Activated CD4-positive, alpha-beta memory T cell treated with anti-CD3 and anti-CD28 coated beads, Interleukin-2, amount 10 ng/mL, durations not matched to agents 7 days and 5 days (primary cell): ENCODE measurements at regions of chr6 and their contacts with region 1.

Region 1: DNA sequence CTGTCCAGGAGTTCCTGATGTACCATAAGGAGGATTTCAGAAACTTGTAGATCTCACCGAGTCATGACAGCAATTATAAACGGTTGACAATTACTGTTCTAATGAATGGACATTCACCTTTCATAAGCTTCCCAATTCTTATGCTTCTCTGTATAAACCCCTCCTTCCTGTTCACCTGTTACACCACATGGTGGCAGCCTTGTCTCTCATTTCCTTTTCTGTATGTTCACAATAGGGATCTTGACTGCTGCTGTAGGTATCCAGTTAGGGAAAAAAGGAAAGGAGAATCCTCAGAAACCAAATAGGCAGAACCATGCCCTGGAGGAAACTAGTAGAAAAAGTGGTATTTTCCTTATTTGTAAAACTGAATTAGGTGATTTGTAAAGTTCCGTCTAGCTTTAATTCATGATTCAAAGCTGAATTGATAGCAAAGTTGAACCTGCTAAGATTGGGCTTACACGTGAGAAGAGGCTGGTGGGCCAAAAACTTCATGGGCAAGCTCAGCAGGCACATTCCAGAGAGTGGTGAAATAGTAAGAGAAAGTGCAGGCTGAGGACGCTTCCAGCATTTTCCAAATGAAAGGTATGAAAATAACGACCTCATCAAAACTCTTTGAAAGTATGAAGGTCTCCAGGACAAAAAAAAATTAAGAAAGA is 29.0 kb upstream of the TBPL1 start:
- DNase-seq: peak; percentile 56
- H3K4me3 Mint-ChIP-seq: no peak overlapping the region
- H3K27ac Mint-ChIP-seq: no peak overlapping the region
- H3K4me1 Mint-ChIP-seq: no peaks in the 10 kb centered on the region
- H3K27me3 Mint-ChIP-seq: peaks cover 34% of the 10 kb centered on the region

Region 2: DNA sequence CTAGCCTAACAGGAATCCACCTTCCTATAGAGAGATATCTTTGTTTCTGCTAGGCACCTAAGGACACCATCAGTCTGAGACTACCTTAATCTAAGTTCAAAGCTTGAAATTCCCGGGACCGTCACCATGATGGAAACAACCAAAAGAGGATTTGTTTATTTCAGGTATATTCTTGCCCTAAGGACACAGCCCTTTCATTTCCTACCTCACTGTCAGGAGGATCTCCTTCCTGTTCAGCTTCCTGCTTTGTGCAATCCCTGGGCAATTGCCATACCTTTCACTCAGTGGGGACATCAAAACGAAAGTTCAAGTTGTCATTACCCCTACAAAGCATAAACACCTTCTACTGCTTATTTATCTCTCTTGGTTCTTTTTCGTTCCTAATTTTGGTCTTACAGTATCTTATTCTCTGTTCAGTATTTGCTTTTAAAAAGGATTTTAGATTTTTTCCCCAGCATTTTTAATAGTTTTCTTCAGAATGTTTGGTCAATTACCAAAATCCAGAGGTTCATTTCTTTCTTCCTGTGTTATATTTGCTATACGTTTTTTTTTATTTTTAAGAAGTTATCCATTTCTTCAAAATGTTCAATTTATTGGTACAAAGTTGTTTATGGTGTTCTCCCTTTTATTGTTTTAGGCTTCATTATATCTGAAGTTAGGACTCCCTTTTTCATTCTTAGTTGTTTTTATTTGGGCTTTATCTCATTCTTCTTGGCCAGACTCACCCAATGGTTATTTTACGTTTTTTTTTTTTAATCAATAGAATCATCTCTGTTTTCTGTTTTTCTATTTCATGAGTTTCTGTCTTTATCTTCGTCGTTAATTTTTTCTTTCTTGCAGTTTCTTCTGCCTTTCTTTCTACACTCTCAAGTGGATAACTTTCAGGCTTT is 16.0 kb after region 1 on chr6:
- CTCF ChIA-PET with region 1: interaction called, 12 read pairs
- POLR2A ChIA-PET with region 1: no interaction called
- DNase-seq: no peak
- H3K4me3 Mint-ChIP-seq: no peak overlapping the region
- H3K27ac Mint-ChIP-seq: no peak overlapping the region
- H3K4me1 Mint-ChIP-seq: peaks cover 2% of the 10 kb centered on the region
- H3K27me3 Mint-ChIP-seq: peaks cover 18% of the 10 kb centered on the region

Region 3: GRCh38 chr6:133945158-133945557 is 21.1 kb after region 1 on chr6:
- CTCF ChIA-PET with region 1: interaction called, 12 read pairs
- POLR2A ChIA-PET with region 1: no interaction called
- DNase-seq: no peak
- H3K4me3 Mint-ChIP-seq: no peak overlapping the region
- H3K27ac Mint-ChIP-seq: no peak overlapping the region
- H3K4me1 Mint-ChIP-seq: peaks cover 2% of the 10 kb centered on the region
- H3K27me3 Mint-ChIP-seq: peaks cover 12% of the 10 kb centered on the region

Region 4: DNA sequence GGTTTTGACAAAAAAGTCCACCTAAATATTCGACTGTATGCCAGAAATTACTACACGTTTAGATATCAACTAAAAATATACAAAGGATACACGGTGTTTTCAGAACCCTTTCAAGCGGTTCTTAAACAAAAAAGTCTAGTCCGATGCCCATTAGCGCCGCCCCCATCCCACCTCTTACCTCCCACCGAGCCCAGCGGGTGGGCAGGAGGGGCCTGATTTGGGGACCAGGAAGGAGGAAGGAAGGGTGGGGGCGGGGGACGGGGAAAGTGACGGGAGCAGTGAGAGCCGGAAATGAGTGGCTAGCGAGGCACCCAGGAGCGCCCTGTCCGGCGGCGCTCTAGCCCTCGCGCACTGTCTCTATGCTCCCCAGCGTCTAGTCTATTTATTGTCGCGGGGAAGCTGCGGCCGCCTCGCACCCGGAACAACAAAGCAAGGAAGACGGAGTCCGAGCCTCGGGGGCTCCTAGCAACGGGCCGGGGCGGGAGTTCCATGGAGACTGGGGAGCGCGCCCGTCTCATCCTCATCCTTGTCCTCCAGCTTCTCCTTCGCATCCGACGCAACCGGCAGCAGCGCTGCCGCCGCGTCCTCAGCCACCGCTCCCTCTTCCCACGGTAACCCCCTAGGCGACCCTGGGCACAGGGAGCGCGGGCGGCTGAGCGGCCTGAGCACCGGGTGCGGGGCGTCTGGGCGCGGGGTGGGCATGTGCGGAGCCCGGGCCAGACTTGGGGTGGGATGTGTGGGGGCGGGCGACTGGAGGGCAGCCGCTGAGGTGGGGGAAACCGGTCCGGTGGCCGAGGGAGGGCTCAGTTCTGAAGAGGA is 29.0 kb after region 1 on chr6 and contains the start of gene TBPL1:
- CTCF ChIA-PET with region 1: interaction called, 11 read pairs
- POLR2A ChIA-PET with region 1: interaction called, 3 read pairs
- DNase-seq: peak; percentile 88
- H3K4me3 Mint-ChIP-seq: peak within 1 kb of the TSS; percentile 96
- H3K27ac Mint-ChIP-seq: peak within 1 kb of the TSS; percentile 74
- H3K4me1 Mint-ChIP-seq: peaks cover 39% of the 10 kb centered on the region
- H3K27me3 Mint-ChIP-seq: peaks cover 7% of the 10 kb centered on the region
- total RNA-seq, gene TBPL1: 33.5 to 35.5 TPM

Region 5: DNA sequence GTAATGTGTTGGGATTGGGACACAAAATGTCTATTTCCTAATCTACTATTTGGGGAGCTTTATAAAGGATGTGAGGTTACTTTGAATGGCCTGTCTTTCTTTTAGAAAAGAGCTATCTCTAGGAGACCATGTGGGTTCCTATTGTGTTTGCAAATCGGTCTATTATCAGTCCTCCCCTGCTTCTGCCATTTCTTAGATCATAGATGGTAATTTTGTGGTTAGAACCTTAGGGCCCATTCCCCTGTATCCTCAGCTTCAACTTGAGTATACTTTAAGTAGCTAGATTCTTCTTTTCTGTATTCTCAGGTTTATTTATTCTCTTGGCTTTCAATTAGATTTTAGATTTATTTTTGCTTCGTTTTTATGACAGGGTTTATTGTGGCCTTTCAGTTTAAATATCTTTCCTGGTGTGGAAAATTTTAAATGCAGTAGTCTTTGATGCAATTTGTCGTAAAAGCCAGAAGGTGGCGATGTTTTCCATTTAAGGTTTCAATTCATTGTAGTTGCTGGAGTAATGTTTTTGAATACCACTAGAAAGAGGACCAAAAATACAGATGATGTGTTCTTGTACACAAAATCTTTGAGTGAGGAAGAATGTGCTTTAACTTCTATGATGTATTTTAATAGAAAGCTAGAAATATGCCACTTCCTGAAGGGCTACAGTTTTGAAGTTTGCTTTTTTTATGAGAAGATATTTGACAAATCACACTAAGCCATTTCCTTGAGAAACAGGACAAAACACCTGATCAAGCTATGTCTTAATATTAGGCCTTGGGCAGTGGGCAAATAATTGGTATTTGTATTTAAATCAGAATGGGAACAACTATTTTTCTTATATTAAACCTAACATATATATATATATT is 49.3 kb after region 1 on chr6:
- CTCF ChIA-PET with region 1: interaction called, 22 read pairs
- POLR2A ChIA-PET with region 1: no interaction called
- DNase-seq: no peak
- H3K4me3 Mint-ChIP-seq: no peak overlapping the region
- H3K27ac Mint-ChIP-seq: no peak overlapping the region
- H3K4me1 Mint-ChIP-seq: peaks cover 13% of the 10 kb centered on the region
- H3K27me3 Mint-ChIP-seq: no peaks in the 10 kb centered on the region

Region 6: GRCh38 chr6:134063966-134064445 is 139.9 kb after region 1 on chr6:
- CTCF ChIA-PET with region 1: interaction called, 89 read pairs
- POLR2A ChIA-PET with region 1: interaction called, 5 read pairs
- DNase-seq: peak; percentile 64
- H3K4me3 Mint-ChIP-seq: no peak overlapping the region
- H3K27ac Mint-ChIP-seq: no peak overlapping the region
- H3K4me1 Mint-ChIP-seq: no peaks in the 10 kb centered on the region
- H3K27me3 Mint-ChIP-seq: no peaks in the 10 kb centered on the region

Region 7: GRCh38 chr6:134090591-134090990 is 166.5 kb after region 1 on chr6:
- CTCF ChIA-PET with region 1: interaction called, 303 read pairs
- POLR2A ChIA-PET with region 1: no interaction called
- DNase-seq: no peak
- H3K4me3 Mint-ChIP-seq: no peak overlapping the region
- H3K27ac Mint-ChIP-seq: no peak overlapping the region
- H3K4me1 Mint-ChIP-seq: peaks cover 7% of the 10 kb centered on the region
- H3K27me3 Mint-ChIP-seq: peaks cover 8% of the 10 kb centered on the region